OCI-LY7 (cell line): ENCODE measurements at regions of chr9 and their contacts with region 1.

Region 1: DNA sequence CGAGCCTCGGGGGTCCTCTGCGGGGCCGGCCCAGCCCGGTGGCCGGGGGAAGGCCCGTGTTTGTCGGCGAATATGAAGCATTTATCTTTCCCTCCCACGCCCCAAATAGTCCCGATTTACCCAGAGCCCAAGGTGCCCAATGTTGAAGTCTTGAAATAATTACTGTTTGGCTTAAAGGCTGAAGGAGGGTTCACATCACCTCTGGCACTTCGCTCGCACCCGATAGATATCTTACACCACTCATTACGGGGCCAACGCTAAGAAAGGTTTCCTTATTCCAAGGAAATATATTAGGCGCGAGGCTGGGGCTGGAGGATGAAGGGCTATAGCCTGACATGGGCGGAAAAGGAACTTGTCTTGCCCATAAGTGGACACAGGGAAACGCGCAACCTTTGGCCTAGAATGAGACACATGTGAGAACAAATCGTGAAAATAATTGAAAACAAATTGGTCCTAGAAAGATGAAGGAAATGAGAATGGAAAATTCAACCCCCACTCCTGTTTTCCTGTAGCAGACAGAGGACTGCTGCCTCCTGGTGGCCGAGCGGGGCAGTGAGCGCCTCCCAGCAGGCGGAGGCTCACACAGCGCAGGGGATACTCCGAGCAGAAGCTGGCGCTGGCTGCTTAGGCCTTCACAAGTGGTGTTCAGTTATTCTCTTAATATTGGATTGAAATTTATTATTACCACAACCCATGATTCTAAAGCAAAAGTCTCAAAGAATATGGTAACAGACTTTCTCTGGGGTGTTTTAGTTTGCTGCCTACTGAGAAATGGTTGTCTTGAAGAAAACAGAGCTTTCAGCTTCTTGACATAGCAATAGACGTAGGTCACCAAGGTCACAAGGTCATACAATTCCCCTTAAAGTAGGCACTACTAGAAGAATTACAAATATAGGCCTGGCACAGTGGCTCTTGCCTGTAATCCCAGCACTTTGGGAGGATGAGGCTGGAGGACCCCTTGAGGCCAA is 7.9 kb downstream of the CCL21 start:
- DNase-seq: peak; percentile 61
- H3K4me3 ChIP-seq: no peak overlapping the region
- H3K27ac ChIP-seq: no peak overlapping the region
- H3K4me1 ChIP-seq: no peaks in the 10 kb centered on the region
- CTCF ChIP-seq: peak; percentile 98

Region 2: GRCh38 chr9:34611829-34612630 is 90.0 kb before region 1 on chr9 and contains the start of gene RPP25L:
- CTCF ChIA-PET with region 1: no interaction called
- POLR2A ChIA-PET with region 1: no interaction called
- intact Hi-C with region 1: loop called (anchors 2 kb)
- DNase-seq: peak; percentile 89
- H3K4me3 ChIP-seq: peak within 1 kb of the TSS; percentile 91
- H3K27ac ChIP-seq: peak within 1 kb of the TSS; percentile 36
- H3K4me1 ChIP-seq: peaks cover 21% of the 10 kb centered on the region
- CTCF ChIP-seq: 0 out of 2 replicates have a peak, but pooled peaks have one; percentile 3
- total RNA-seq, gene RPP25L: 33.6 and 40.3 TPM in 2 replicates

Region 3: DNA sequence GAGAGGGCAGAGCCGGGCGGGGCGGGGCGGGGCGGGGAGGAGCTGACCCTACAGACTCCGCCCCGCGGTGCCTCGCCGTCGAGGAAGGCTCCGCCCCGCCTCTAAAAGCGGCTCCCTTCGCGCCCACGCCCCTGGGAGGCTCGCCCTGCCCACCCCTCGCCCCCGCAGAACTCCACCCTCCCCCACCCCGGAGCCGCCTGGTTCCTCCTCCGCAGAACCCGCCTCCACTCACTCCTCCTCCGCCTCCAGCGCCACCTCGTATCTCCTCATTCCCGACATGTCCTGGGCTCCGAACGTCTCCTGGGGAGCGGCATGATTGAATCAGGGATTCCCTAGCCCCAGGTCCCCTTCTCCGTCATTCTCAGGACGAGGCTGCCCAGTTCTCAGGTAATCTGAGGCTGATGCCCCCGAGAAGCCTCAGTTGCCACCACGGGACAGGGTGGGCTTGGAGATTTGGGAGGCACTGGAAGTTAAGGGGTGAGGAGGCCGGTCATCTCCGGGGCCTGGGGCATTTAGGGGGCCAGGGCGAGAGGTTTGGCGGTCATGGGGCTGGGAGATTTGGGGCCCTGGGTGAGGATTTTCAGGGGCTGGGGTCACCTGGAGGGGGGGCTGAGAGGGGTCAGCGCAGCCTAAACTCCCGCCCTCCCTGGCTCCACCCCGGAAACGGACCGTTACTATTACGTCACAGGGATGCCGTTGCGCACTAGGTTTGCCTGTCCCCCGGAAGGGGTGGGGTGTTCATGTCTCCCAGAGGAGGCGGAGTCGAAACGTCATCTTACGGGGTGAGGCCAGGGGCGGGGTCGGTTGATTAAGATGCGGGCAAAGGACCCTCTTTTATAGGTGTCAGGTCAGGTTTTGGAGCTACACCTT is 36.4 kb before region 1 on chr9:
- CTCF ChIA-PET with region 1: no interaction called
- POLR2A ChIA-PET with region 1: no interaction called
- intact Hi-C with region 1: loop called (anchors 1 kb)
- DNase-seq: peak; percentile 95
- H3K4me3 ChIP-seq: peak overlapping the region; percentile 96
- H3K27ac ChIP-seq: peak overlapping the region; percentile 82
- H3K4me1 ChIP-seq: peaks cover 13% of the 10 kb centered on the region
- CTCF ChIP-seq: no peak

Region 4: DNA sequence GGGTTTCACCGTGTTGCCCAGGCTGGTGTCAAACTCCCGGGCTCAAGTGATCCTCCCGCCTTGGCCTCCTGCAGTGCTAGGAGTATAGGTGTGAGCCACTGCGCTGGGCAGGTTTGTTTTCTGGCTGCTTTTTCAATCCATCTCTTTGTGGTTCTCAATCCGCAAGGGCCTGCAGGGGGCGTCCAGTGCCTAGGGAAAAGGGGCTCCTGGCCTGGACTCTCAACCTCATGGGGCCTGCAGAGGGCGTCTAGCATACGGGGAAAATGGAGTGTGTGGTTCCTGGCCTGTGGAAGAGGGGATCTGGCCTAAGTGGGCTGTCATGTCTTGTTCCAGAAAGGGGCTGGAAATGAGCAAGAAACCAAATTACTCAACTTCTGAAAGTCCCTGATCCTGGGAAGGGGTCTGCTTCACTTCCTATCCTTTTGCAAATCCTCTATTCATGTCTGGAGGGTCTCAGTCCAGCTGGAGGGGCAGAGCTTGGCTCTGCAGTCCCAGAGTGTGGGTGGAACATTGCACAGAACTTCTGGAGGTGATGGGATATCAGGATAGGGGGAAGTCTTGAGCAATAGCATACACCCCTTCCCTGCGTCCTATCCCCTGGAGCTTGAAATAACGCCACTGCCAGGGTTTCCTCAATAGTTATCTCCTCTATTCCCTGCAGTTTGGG is 26.9 kb before region 1 on chr9:
- CTCF ChIA-PET with region 1: interaction called, 3 read pairs
- POLR2A ChIA-PET with region 1: interaction called, 3 read pairs
- intact Hi-C with region 1: loop called (anchors 1 kb)
- DNase-seq: peak; percentile 69
- H3K4me3 ChIP-seq: no peak overlapping the region
- H3K27ac ChIP-seq: no peak overlapping the region
- H3K4me1 ChIP-seq: no peaks in the 10 kb centered on the region
- CTCF ChIP-seq: peak; percentile 90

Region 5: DNA sequence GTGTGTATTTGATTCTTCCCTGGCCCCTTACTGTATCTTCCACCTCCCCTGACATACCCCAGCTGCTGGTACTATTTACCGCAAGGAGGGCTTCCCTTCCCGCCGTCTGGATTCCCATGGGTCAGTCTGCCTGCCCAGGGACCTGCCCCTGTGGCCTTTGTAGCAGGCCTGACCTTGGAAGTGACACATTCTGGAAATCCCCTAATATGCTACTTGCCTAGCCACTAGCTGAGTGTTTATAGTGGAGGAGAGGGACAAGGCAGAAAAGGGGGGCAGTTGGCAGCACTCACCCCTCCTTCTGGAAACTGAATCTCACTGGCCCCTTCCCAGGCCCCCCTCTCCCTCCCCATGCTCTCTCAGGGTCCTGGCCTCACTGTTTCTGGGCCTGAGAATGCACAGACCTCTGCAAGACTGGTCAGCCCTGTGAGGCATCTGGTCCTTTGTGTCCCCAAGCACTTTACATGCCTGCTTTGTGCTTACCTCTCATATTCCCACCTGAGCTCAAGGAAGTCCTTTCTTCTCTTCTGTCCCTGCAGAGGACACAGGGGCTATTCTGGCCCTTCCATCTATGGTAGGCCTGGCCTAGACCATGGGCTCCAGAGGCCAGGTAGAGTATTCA is 16.1 kb after region 1 on chr9:
- CTCF ChIA-PET with region 1: no interaction called
- POLR2A ChIA-PET with region 1: no interaction called
- intact Hi-C with region 1: no loop called
- DNase-seq: no peak
- H3K4me3 ChIP-seq: no peak overlapping the region
- H3K27ac ChIP-seq: no peak overlapping the region
- H3K4me1 ChIP-seq: no peaks in the 10 kb centered on the region
- CTCF ChIP-seq: no peak

Region 6: DNA sequence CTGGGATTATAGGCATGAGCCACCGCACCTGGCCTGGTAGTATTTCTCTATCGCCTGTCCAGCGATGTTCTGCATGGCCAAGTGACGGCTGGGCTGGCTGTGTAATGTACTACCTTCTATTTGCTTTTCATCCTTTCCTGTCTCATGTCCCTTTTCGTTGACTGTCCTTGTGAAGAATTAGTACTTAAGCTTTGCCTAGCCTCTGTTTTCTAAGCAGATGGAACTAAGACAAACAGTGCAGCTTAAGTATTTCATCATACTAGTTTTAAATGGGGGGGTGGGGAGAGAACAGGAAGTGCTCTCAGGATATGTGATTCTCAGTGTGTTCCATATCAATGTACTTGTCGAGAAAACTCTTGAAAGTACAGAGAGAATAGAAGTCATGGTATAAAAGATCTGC is 39.6 kb after region 1 on chr9:
- CTCF ChIA-PET with region 1: interaction called, 11 read pairs
- POLR2A ChIA-PET with region 1: no interaction called
- intact Hi-C with region 1: no loop called
- DNase-seq: no peak
- H3K4me3 ChIP-seq: no peak overlapping the region
- H3K27ac ChIP-seq: no peak overlapping the region
- H3K4me1 ChIP-seq: no peaks in the 10 kb centered on the region
- CTCF ChIP-seq: no peak